ENCODE measurements at regions of chr11 and their contacts with region 1.

Region 1: GRCh38 chr11:8964324-8965320 is at the start of gene TMEM9B:
- DNase-seq: peak; percentile 91 to 97 (median 96)
- H3K4me3 ChIP-seq: peak within 1 kb of the TSS; percentile 26 to 89 (median 70)
- H3K27ac ChIP-seq: peak within 1 kb of the TSS; percentile 79 to 99 (median 95)
- H3K4me1 ChIP-seq: peaks cover 19 to 35% of the 10 kb centered on the region in 2 donors
- H3K27me3 ChIP-seq: no peaks in the 10 kb centered on the region
- CTCF ChIP-seq: peak in 1 of 6 experiments; percentile 12
- POLR2A ChIP-seq: peak; percentile 86 to 97
- total RNA-seq, gene TMEM9B: 29.1 to 69.6 (median 47.2) TPM

Region 2: DNA sequence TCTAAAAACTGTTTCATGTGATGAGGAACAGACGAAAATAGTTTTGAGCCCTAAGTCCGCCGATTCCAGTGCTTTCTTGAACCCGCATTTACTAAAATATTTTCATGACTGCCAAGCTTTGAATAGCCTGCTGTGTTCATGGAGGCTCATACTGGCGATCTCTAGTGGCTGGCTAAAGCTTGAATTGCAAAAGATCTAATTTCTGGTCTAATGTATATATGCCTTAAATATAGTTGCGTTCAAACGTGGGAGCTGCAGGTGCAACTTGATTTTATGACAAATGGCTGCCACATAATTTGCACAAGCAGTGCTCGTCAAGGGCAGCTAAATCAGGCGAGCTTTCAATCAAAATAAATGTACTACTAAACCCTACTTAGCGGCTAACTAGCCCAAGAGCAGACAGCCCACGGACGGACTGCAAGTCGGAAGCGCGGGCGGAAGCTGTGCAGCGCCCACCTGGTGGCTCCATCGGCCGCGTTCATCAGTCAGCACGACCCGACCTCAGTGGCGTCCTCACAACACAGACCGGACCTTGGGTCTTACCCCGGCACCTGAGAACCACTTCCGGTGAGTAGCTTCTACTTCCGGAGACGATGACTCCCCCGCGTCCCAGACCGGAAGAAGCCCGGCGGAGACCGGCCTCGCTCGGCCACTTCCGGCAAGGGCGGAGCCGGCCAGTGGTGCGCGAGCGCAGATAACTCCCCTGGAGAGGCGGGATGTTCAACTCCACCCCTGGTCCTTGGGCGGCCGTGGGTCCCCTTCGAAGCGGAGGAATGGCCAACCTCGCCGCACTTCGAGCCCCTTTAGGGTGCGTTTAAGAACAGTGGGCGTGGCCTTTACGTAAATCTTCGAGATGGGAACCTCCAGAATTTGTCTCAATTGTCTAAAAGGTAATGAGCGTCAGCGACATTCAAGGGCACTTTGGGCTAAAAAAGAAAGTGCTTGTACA is 275.9 kb before region 1 on chr11:
- intact Hi-C with region 1: loop called in 1 of 2 experiments (anchors 5 kb)
- DNase-seq: peak; percentile 94 to 98 (median 96)
- H3K4me3 ChIP-seq: peak overlapping the region in 3 of 4 donors; percentile 27 to 71 (median 50)
- H3K27ac ChIP-seq: peak overlapping the region; percentile 5 to 96 (median 66)
- H3K4me1 ChIP-seq: peaks cover 7 to 41% of the 10 kb centered on the region in 2 donors
- H3K27me3 ChIP-seq: no peaks in the 10 kb centered on the region
- CTCF ChIP-seq: peak in 2 of 6 experiments; percentile 19 to 25
- POLR2A ChIP-seq: peak; percentile 49 to 89

Region 3: GRCh38 chr11:8917157-8917825 is 47.3 kb before region 1 on chr11:
- intact Hi-C with region 1: loop called in 1 of 2 experiments (anchors 5 kb)
- DNase-seq: no peak
- H3K4me3 ChIP-seq: no peak overlapping the region
- H3K27ac ChIP-seq: peak overlapping the region in 2 of 5 donors; percentile 10 to 30
- H3K4me1 ChIP-seq: peaks cover 0 to 24% of the 10 kb centered on the region in 2 donors
- H3K27me3 ChIP-seq: no peaks in the 10 kb centered on the region
- CTCF ChIP-seq: no peak
- POLR2A ChIP-seq: no peak